Activated CD4-positive, alpha-beta memory T cell treated with anti-CD3 and anti-CD28 coated beads for 36 hours (primary cell): ENCODE measurements at regions of chr4 and their contacts with region 1.

Region 1: GRCh38 chr4:38856524-38857337 is at the start of gene TLR6:
- DNase-seq: peak; percentile 70
- H3K4me3 Mint-ChIP-seq: peak within 1 kb of the TSS; percentile 77
- H3K27ac Mint-ChIP-seq: peak within 1 kb of the TSS; percentile 89
- H3K4me1 Mint-ChIP-seq: peaks cover 35% of the 10 kb centered on the region
- H3K27me3 Mint-ChIP-seq: peaks cover 4% of the 10 kb centered on the region
- total RNA-seq, gene TLR6: 1.4 to 2.2 TPM

Region 2: DNA sequence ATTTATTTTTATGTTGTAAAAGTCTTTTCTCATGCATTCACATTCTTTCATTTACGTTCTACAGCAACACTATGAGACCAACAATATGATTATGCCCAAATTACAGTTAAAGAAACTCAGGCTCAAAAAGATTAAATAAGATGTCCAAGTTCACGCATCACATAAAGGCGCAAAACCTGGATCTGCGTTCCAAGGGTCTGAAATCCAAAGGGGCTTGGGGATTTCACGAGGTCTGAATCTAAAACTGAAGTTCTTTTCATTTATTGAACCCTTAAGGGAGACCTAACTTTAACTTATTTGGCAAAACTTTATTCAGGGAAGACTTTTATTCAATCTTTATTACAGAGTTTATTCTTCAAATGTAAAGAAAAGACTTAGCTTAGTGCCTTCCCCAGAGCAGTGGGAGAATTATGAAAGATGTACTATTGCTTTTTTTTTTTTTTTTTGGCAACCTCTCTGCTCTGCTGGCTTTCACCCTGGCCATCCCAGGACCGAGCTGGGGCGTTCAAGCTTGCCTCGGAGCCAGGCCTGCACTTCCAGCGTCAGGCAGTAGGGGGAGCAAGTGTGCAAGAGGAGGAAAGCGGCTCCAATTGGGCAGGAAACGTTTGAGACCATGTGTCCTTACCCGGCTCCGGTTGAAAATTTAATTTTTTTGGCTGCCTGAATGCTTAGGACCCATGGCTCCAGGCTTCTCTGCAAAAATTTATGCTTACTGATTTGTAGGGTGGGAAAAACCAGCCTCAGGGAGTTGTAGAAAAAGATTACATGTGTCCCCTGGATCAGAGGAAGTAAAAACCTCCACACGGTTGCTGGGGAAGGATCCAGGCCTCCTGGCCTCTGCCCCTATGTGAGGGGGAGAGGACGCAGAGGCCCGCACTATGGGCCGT is 537.0 kb before region 1 on chr4:
- CTCF ChIA-PET with region 1: interaction called, 3 read pairs
- POLR2A ChIA-PET with region 1: no interaction called
- intact Hi-C with region 1: loop called (anchors 10 kb)
- DNase-seq: peak; percentile 95
- H3K4me3 Mint-ChIP-seq: peak overlapping the region; percentile 77
- H3K27ac Mint-ChIP-seq: peak overlapping the region; percentile 85
- H3K4me1 Mint-ChIP-seq: peaks cover 34% of the 10 kb centered on the region
- H3K27me3 Mint-ChIP-seq: no peaks in the 10 kb centered on the region

Region 3: GRCh38 chr4:38768968-38769394 is 87.8 kb before region 1 on chr4:
- CTCF ChIA-PET with region 1: interaction called, 10 read pairs
- POLR2A ChIA-PET with region 1: no interaction called
- intact Hi-C with region 1: no loop called
- DNase-seq: no peak
- H3K4me3 Mint-ChIP-seq: no peak overlapping the region
- H3K27ac Mint-ChIP-seq: no peak overlapping the region
- H3K4me1 Mint-ChIP-seq: no peaks in the 10 kb centered on the region
- H3K27me3 Mint-ChIP-seq: peaks cover 3% of the 10 kb centered on the region

Region 4: GRCh38 chr4:38804654-38805295 is 52.0 kb before region 1 on chr4 and contains the start of gene TLR1:
- CTCF ChIA-PET with region 1: interaction called, 23 read pairs
- POLR2A ChIA-PET with region 1: interaction called, 3 read pairs
- intact Hi-C with region 1: loop called (anchors 1 kb)
- DNase-seq: peak; percentile 24
- H3K4me3 Mint-ChIP-seq: peak within 1 kb of the TSS; percentile 76
- H3K27ac Mint-ChIP-seq: peak within 1 kb of the TSS; percentile 91
- H3K4me1 Mint-ChIP-seq: peaks cover 35% of the 10 kb centered on the region
- H3K27me3 Mint-ChIP-seq: no peaks in the 10 kb centered on the region
- total RNA-seq, gene TLR1: 1.5 to 1.8 TPM

Region 5: DNA sequence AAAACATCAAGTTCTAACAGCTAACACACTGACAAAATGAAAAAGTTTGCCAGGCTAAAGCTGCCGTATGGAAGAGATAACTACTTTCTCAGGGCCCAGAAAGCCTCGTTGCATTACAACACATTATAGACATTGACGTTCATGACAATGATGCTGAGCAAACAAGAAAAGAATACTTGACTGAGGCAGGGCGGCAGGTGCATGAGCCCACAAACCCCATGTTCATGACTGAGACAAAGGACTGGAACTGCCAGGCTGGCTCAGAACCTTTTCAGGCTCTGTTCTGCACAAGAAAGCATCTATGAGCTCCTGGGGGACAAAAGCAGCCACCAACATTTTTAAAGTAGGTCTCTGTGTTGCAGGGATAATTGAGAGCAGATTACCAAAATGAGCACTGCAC is 13.7 kb before region 1 on chr4:
- CTCF ChIA-PET with region 1: interaction called, 17 read pairs
- POLR2A ChIA-PET with region 1: no interaction called
- intact Hi-C with region 1: loop called (anchors 2 kb)
- DNase-seq: no peak
- H3K4me3 Mint-ChIP-seq: no peak overlapping the region
- H3K27ac Mint-ChIP-seq: no peak overlapping the region
- H3K4me1 Mint-ChIP-seq: peaks cover 7% of the 10 kb centered on the region
- H3K27me3 Mint-ChIP-seq: no peaks in the 10 kb centered on the region

Region 6: GRCh38 chr4:38889143-38889542 is 32.4 kb after region 1 on chr4:
- CTCF ChIA-PET with region 1: interaction called, 18 read pairs
- POLR2A ChIA-PET with region 1: no interaction called
- intact Hi-C with region 1: no loop called
- DNase-seq: no peak
- H3K4me3 Mint-ChIP-seq: peak overlapping the region; percentile 48
- H3K27ac Mint-ChIP-seq: peak overlapping the region; percentile 81
- H3K4me1 Mint-ChIP-seq: peaks cover 22% of the 10 kb centered on the region
- H3K27me3 Mint-ChIP-seq: no peaks in the 10 kb centered on the region

Region 7: DNA sequence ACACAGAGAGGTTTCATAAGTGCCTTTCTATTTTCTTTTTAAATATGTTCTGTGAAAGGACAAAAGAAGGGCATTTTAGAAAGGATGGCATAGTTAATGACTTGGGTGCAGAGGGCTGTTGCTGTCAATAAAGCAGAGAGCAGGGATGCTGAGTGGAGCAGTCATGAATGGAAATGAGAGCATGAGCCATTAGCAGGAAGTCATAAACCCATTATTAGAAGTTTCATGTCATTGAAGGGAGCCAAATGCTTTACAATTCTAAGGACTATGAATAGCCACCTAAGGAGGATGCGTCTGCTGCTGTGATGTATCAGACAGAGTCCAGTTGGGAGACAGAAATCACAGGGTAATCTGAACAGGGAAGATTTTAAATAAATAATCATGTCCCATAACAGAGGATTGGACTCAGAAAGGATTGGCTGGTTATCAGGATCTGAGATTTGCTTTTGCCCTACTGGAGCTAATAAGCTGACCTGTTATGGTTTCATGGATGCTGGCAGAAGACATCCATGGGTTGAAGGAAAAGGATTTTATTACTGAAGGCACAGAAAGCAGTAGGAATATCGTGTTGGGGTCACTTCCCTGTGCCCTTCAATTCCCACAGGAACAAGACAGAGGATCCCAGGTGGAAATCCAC is 278.1 kb after region 1 on chr4:
- CTCF ChIA-PET with region 1: interaction called, 10 read pairs
- POLR2A ChIA-PET with region 1: no interaction called
- intact Hi-C with region 1: no loop called
- DNase-seq: no peak
- H3K4me3 Mint-ChIP-seq: no peak overlapping the region
- H3K27ac Mint-ChIP-seq: no peak overlapping the region
- H3K4me1 Mint-ChIP-seq: peaks cover 7% of the 10 kb centered on the region
- H3K27me3 Mint-ChIP-seq: no peaks in the 10 kb centered on the region